ENCODE measurements at regions of chr13 and their contacts with region 1.

Region 1: DNA sequence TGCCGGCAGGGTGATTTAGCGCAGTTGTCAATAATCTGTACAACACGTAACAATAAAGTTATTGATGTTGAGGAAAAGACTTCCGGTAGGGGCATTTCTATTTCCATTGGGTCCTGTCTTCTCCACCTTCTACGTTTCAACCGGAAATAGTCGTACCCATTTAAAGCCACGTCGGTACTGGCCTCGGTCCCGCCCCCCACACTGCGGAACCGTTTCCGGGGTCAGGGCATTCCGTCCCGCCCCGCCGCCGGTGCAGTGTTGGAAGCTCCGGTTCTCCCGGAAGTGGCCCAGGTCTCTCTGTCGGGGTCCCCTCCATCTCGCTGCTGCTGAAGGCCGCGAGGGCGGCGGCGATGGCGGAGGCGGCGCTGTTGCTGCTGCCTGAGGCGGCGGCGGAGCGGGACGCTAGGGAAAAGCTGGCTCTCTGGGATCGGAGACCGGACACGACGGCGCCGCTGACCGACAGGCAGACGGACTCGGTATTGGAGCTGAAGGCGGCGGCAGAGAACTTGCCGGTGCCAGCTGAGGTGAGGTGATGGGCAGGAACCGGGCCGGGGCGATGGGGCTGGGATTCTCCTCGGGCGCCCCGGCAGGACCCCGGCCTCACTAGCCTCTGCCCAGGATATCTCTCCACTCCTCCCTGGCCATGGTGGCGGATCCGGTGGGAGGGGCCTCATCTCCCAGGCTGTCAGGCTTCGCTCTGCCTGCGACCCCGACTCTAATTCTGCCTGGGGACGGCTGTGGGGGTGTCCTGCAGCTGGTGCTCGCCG is at the start of gene COG3:
- DNase-seq: peak; percentile 97
- H3K4me3 Mint-ChIP-seq: peak within 1 kb of the TSS; percentile 88
- H3K27ac Mint-ChIP-seq: peak within 1 kb of the TSS; percentile 92
- H3K4me1 Mint-ChIP-seq: peaks cover 59% of the 10 kb centered on the region
- H3K27me3 Mint-ChIP-seq: no peaks in the 10 kb centered on the region
- total RNA-seq, gene COG3: 19.1 to 19.3 TPM

Region 2: DNA sequence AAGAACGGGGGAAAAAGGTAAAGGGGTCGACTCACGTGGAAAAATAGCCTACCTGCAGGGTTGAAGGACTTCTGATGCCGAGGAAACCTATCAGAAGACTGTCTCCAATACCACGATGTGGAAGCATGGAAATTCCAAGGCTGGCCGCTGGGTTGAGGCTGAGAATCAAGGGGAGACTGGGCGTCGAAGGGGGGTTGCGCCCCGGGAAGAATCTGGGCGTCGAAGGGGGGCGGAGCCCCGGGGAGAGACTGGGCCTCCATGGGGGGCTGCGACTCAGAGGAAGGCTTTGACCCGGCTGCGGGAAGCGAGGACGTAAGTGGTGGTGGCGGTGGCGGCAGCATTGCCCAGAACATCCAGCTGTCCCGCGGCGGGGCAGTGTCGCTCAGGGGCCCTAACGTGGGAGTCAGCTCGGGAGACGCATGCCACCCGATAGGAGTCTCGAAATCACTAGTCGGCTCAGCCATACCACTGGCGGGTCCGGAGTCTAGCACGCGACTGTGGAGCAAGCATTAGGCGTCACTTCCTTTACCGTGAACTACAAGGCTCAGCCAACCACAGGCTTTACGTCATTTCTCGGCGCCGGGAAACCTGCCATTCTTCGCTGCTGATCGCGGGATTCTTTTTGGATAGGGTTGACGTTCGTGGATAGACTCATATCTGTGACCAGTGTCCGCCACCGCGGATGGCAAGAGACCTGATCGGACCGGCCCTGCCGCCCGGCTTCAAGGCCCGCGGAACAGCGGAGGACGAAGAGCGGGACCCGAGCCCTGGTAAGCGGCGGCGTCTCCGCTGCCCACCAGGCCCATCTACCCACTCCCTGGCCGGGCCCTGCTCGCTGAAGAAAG is 475.7 kb before region 1 on chr13 and contains the starts of genes GPALPP1 and NUFIP1:
- CTCF ChIA-PET with region 1: no interaction called
- intact Hi-C with region 1: loop called (anchors 1 kb)
- DNase-seq: peak; percentile 98
- H3K4me3 Mint-ChIP-seq: peak within 1 kb of the TSS; percentile 98
- H3K27ac Mint-ChIP-seq: peak within 1 kb of the TSS; percentile 88
- H3K4me1 Mint-ChIP-seq: peaks cover 60% of the 10 kb centered on the region
- H3K27me3 Mint-ChIP-seq: no peaks in the 10 kb centered on the region
- total RNA-seq, gene GPALPP1: 25.0 to 26.9 TPM
- total RNA-seq, gene NUFIP1: 7.2 to 8.9 TPM

Region 3: DNA sequence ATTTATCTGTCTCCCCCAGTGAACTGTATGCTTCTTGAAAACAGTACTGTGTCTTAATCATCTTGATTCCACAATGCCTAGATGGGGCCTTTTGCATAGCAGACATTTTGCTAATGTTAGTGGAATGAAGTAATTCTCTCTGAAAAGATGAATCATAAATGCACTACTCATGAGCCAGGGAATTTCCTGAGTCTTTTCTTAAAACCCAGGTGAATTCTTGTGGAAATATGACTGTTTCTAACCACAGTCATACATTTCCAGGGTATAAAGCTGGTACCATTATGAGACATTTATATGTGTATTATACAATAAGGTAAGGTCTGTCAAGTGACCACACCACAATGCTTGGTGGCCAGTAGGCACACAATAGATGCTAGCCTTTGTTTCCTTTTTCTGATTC is 258.5 kb before region 1 on chr13:
- CTCF ChIA-PET with region 1: no interaction called
- intact Hi-C with region 1: loop called (anchors 5 kb)
- DNase-seq: peak; percentile 33
- H3K4me3 Mint-ChIP-seq: no peak overlapping the region
- H3K27ac Mint-ChIP-seq: peak overlapping the region; percentile 37
- H3K4me1 Mint-ChIP-seq: peaks cover 31% of the 10 kb centered on the region
- H3K27me3 Mint-ChIP-seq: no peaks in the 10 kb centered on the region

Region 4: GRCh38 chr13:45393941-45394570 is 70.8 kb before region 1 on chr13:
- CTCF ChIA-PET with region 1: interaction called, 8 read pairs
- intact Hi-C with region 1: loop called (anchors 1 kb)
- DNase-seq: peak; percentile 61
- H3K4me3 Mint-ChIP-seq: no peak overlapping the region
- H3K27ac Mint-ChIP-seq: no peak overlapping the region
- H3K4me1 Mint-ChIP-seq: peaks cover 47% of the 10 kb centered on the region
- H3K27me3 Mint-ChIP-seq: no peaks in the 10 kb centered on the region

Region 5: DNA sequence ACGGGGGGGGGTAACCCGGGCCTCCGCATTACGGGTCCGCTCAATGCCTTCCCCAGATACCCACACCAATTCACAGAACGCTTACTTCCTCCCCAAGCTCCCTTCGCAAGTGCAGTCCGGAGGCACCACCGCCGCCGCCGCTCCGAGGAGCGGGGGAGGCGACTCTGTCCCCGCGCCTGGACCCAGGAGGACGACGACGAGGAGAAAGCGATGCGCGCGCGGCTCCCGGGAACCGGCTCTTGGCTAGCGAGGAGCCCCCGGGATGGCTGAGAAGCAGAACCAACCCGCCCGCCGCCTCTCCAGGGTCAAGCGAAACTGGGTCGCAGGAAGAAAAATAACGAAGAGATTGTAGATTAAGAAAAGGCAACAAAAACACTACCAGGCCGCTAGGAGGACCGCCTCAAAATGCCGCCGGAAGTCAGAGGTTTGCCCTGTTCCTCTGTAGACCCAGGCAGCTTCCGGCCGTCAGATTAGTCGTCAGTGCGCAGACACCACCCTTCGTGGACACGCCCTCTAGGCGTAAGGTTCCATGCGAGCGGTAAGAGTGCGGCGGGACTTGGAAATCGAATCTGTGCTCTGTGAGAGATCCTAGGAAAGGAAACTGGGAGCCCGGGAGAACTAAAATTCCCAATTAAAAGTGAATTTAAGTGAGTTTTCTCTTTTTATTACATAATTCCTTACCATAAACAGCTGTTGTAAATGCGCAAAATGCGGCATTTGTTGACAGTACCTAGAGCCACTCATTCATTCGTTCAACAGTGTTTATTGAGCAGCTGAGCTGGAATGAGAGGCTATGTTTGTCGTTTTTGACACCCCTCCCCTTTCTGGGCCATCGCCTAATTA is 587.7 kb after region 1 on chr13 and contains the start of gene ZC3H13:
- CTCF ChIA-PET with region 1: no interaction called
- intact Hi-C with region 1: loop called (anchors 5 kb)
- DNase-seq: peak; percentile 97
- H3K4me3 Mint-ChIP-seq: peak within 1 kb of the TSS; percentile 81
- H3K27ac Mint-ChIP-seq: peak within 1 kb of the TSS; percentile 94
- H3K4me1 Mint-ChIP-seq: peaks cover 29% of the 10 kb centered on the region
- H3K27me3 Mint-ChIP-seq: peaks cover 4% of the 10 kb centered on the region
- total RNA-seq, gene ZC3H13: 38.2 to 42.2 TPM